Heart right ventricle (tissue), 16 donors: ENCODE measurements at regions of chr16 and their contacts with region 1.

Region 1: GRCh38 chr16:65716737-65717700 is 595.2 kb upstream of the CDH11 start:
- DNase-seq: no peak
- ATAC-seq: no peak
- H3K4me3 ChIP-seq: no peak overlapping the region
- H3K27ac ChIP-seq: no peak overlapping the region
- H3K4me1 ChIP-seq: no peaks in the 10 kb centered on the region
- H3K27me3 ChIP-seq: peaks cover 0 to 25% (median 0%) of the 10 kb centered on the region in 7 donors
- CTCF ChIP-seq: no peak

Region 2: GRCh38 chr16:65769776-65770660 is 53.0 kb after region 1 on chr16:
- intact Hi-C with region 1: loop called in 1 of 10 experiments (anchors 10 kb)
- DNase-seq: no peak
- ATAC-seq: no peak
- H3K4me3 ChIP-seq: no peak overlapping the region
- H3K27ac ChIP-seq: no peak overlapping the region
- H3K4me1 ChIP-seq: no peaks in the 10 kb centered on the region
- H3K27me3 ChIP-seq: no peaks in the 10 kb centered on the region
- CTCF ChIP-seq: no peak

Region 3: GRCh38 chr16:65786916-65787315 is 69.9 kb after region 1 on chr16:
- intact Hi-C with region 1: no loop called
- DNase-seq: no peak
- ATAC-seq: peak in 2 of 8 donors; percentile 12 to 55
- H3K4me3 ChIP-seq: no peak overlapping the region
- H3K27ac ChIP-seq: no peak overlapping the region
- H3K4me1 ChIP-seq: no peaks in the 10 kb centered on the region
- H3K27me3 ChIP-seq: no peaks in the 10 kb centered on the region
- CTCF ChIP-seq: no peak